ENCODE measurements at regions of chr14 and their contacts with region 1.

Region 1: GRCh38 chr14:39122330-39123138 is 8.4 kb downstream of the GEMIN2 start:
- DNase-seq: no peak
- H3K4me3 ChIP-seq: no peak overlapping the region
- H3K27ac ChIP-seq: no peak overlapping the region
- H3K4me1 ChIP-seq: no peaks in the 10 kb centered on the region
- CTCF ChIP-seq: no peak

Region 2: DNA sequence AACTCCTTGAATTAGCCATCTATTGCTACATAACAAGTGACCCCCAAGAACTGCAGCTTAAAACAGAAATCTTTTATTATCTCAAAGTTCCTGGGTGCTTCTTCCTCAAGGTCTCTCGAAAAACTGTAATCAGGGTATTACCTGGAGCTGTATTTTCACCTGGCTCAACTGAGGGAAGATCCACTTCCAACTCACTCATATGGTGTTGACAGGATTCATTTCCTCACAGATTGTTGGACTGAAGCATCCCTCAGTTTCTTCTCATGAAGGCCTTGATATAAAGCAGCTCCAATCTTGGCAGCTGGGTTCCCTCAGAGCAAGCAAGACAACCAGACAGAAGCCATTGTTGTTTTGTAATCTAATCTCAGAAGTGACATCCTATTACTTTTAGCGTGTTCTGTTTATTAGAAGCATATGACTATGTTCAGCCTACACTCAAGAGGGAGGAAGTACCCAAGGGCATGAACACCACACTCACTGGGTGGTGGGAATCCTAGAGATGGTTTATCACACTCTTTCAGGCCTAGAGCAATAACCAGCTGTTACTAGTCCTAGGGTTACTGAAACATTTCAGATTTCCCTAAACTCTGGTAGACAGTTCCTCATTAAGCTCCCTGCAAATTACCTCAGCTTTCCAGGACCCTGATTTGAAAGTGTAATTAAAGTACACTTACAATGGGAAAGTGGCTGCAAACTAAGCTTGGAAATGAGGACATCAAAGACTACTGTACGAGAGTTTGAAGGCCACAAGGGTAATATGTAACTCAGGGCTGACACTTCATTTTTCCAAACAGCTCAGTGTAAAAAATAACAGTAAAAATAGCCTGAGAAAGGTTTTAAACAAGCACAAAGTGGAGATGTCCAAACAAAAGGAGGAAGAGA is 241.7 kb before region 1 on chr14:
- CTCF ChIA-PET with region 1: no interaction called
- POLR2A ChIA-PET with region 1: no interaction called
- intact Hi-C with region 1: no loop called
- DNase-seq: no peak
- H3K4me3 ChIP-seq: no peak overlapping the region
- H3K27ac ChIP-seq: no peak overlapping the region
- H3K4me1 ChIP-seq: no peaks in the 10 kb centered on the region
- CTCF ChIP-seq: no peak

Region 3: GRCh38 chr14:39145266-39145966 is 22.9 kb after region 1 on chr14:
- CTCF ChIA-PET with region 1: no interaction called
- POLR2A ChIA-PET with region 1: interaction called, 18 read pairs
- intact Hi-C with region 1: no loop called
- DNase-seq: no peak
- H3K4me3 ChIP-seq: no peak overlapping the region
- H3K27ac ChIP-seq: no peak overlapping the region
- H3K4me1 ChIP-seq: no peaks in the 10 kb centered on the region
- CTCF ChIP-seq: no peak

Region 4: DNA sequence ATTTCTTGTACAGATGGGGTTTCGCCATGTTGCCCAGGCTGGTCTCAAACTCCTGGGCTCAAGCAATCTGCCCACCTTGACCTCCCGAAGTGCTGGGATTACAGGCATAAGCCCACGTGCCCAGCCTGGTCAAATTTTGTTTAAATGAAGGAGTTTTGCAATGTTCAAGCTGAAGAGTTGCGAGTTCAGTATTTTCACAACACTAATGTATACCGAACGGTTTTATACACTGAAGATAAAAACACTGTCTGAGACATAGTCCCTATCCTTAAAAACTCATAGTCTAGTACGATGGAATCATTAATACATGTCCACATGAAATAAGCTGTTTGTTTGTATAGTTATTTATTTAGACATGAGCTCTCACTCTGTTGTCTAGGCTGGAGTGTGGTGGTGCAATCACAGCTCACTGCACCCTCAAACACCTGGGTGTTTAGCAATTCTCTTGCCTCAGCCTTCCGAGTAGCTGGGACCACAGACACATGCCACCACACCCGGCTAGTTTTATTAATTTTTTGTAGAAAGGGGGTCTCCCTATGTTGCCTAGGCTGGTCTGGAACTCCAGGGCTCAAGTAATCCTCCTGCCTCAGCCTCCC is 32.2 kb after region 1 on chr14:
- CTCF ChIA-PET with region 1: no interaction called
- POLR2A ChIA-PET with region 1: interaction called, 18 read pairs
- intact Hi-C with region 1: loop called (anchors 5 kb)
- DNase-seq: no peak
- H3K4me3 ChIP-seq: no peak overlapping the region
- H3K27ac ChIP-seq: no peak overlapping the region
- H3K4me1 ChIP-seq: no peaks in the 10 kb centered on the region
- CTCF ChIP-seq: no peak